Right cardiac atrium (tissue), 5 donors: ENCODE measurements at regions of chr16 and their contacts with region 1.

Region 1: DNA sequence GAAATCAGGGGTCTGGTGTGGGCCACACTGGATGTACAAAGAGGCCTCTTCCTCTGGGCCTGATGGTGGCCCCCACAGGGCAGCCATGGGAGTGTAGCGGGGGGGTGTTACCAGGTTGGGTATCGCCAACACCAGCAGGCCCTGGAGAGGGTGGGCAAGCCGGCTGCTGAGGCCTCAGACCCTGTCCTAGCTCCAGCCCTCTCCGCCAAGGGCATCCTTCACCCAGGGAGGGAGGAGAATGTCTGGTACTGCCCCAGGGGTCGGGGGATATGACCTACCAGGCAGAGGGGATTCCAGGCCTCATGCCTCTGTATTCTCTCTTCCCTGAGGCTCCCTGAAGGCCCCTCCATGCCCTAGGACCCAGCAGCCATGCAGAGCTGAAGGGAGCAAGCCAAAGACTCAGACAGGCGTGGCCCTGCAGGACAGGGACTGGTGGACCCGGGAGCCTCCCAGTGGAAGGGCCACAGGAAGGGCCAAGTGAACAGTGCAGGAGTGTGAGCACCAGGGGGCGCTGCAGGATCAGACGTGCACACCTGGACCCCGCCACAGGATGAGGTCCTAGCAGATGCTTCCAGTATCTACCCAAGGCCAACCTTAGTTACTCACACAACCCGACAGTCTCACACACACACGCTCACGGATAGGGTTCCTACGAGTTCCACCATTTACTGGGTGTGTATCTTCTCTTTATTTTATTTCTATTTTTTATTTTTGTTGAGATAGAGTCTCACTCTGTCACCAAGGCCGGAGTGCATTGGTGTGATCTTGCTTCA is 10.9 kb upstream of the CES4A start:
- DNase-seq: peak; percentile 88 to 96 (median 95)
- ATAC-seq: peak; percentile 93 to 95
- H3K4me3 ChIP-seq: no peak overlapping the region
- H3K27ac ChIP-seq: no peak overlapping the region
- H3K4me1 ChIP-seq: no peaks in the 10 kb centered on the region
- H3K27me3 ChIP-seq: no peaks in the 10 kb centered on the region

Region 2: GRCh38 chr16:66886346-66886745 is 91.2 kb before region 1 on chr16:
- intact Hi-C with region 1: no loop called
- DNase-seq: no peak
- ATAC-seq: no peak
- H3K4me3 ChIP-seq: no peak overlapping the region
- H3K27ac ChIP-seq: no peak overlapping the region
- H3K4me1 ChIP-seq: no peaks in the 10 kb centered on the region
- H3K27me3 ChIP-seq: no peaks in the 10 kb centered on the region

Region 3: DNA sequence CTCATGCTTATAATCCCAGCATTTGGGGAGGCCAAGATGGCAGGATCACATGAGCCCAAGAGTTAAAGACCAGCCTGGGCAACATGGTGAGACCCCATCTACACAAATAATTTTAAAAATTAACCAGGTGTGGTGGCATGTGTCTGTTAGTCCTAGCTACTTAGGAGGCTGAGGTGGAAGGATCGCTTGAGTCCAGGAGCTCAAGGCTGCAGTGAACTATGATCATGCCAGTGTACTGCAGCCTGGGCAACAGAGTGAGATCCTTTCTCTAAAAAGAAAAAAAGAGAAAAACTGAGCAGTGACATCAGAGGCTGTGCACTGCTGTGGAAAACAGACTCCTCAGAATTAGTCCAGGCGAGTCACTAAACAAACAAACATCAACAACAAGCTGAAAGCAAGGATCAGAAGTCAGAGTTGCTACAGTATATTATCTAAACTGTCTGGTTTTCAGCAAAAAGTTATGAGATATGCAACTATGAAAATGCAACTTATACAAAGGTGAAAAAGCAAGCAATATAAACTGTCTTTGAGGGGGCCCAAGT is 90.8 kb after region 1 on chr16:
- intact Hi-C with region 1: no loop called
- DNase-seq: no peak
- ATAC-seq: no peak
- H3K4me3 ChIP-seq: no peak overlapping the region
- H3K27ac ChIP-seq: no peak overlapping the region
- H3K4me1 ChIP-seq: no peaks in the 10 kb centered on the region
- H3K27me3 ChIP-seq: no peaks in the 10 kb centered on the region

Region 4: DNA sequence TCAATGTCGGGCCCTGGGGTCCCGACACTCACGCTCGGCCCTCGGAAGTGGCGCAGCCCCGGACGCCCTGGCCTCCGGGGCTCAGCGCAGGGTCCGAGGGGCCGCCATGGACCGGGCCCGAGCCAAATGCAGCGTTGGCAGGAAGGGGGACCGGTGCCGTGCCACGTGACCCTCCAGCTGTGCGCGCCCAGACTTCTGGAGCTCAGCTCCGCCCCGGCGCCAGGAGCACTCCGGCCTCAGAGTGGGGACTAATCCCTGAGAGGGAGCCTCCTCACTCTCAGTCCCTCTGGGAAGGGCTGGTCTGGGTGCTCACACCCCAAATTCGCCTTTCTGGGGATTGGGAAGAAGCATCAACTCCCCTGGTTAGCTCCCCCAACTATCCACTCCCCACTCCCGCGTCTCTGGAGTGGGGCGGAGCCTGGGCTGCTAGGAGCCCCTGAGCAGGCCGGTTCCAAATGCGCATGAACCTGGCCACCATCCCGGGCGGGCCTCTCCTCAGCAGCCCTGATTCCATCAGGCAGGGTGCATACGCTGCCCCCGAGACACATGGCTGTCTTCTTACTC is 173.4 kb after region 1 on chr16 and contains the start of gene B3GNT9:
- intact Hi-C with region 1: loop called (anchors 2 to 5 kb)
- DNase-seq: peak; percentile 88 to 95 (median 94)
- ATAC-seq: peak; percentile 85 to 86
- H3K4me3 ChIP-seq: peak within 1 kb of the TSS; percentile 56
- H3K27ac ChIP-seq: peak within 1 kb of the TSS; percentile 68
- H3K4me1 ChIP-seq: peaks cover 3% of the 10 kb centered on the region
- H3K27me3 ChIP-seq: no peaks in the 10 kb centered on the region
- total RNA-seq, gene B3GNT9: 17.0 to 19.8 (median 18.7) TPM

Region 5: DNA sequence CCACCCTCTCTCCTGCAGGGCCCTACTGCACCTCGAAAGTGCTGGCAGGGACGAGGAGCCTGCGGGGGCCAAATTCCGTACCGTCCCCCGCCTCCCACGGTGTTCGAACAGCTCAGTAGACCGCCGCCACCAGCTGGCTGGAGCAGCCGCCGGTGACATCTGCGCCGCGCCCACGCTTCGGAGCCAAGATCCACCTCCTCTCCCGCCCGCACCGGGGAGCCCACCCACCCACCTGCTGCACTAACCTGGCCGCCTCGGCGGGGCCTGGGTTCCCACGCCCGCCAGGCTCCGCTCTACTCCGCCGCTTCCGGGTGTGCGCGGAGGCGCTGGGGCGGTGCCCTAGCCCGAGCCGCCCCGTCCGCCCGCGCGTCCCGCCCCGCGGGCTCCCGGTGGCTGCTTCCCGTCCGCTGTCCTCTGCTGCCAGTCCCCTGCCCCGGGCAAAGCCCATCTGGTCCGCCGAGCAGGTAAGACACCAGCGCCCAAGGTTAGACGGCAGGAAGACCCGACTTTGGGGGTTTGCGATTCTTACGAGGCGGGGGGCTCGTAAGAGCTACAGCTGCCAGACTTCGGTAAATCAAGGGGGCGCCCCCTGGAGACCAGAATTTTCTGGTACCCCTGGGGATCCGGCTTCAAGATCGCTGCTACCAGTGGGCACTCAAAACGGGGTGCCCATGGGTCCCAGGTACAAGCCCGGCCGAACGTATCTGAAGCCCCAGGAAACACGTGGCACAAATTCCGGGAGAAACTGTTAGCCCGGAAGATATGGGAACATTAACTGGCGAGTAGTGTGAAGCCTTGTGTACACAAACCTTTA is 182.3 kb after region 1 on chr16 and contains the starts of genes FBXL8 and TRADD:
- intact Hi-C with region 1: loop called in 3 of 4 experiments (anchors 2 to 5 kb)
- DNase-seq: peak; percentile 77 to 91 (median 90)
- ATAC-seq: peak; percentile 71 to 82
- H3K4me3 ChIP-seq: peak within 1 kb of the TSS; percentile 78
- H3K27ac ChIP-seq: peak within 1 kb of the TSS; percentile 57
- H3K4me1 ChIP-seq: peaks cover 5% of the 10 kb centered on the region
- H3K27me3 ChIP-seq: no peaks in the 10 kb centered on the region
- total RNA-seq, gene FBXL8: 7.7 to 13.9 (median 9.9) TPM
- total RNA-seq, gene TRADD: 9.0 to 11.1 (median 9.8) TPM

Region 6: GRCh38 chr16:67399181-67399733 is 421.7 kb after region 1 on chr16:
- intact Hi-C with region 1: no loop called
- DNase-seq: peak; percentile 42 to 89 (median 84)
- ATAC-seq: peak; percentile 29 to 48
- H3K4me3 ChIP-seq: no peak overlapping the region
- H3K27ac ChIP-seq: no peak overlapping the region
- H3K4me1 ChIP-seq: peaks cover 12% of the 10 kb centered on the region
- H3K27me3 ChIP-seq: no peaks in the 10 kb centered on the region